GM13976 (cell line): ENCODE measurements at regions of chr11 and their contacts with region 1.

Region 1: DNA sequence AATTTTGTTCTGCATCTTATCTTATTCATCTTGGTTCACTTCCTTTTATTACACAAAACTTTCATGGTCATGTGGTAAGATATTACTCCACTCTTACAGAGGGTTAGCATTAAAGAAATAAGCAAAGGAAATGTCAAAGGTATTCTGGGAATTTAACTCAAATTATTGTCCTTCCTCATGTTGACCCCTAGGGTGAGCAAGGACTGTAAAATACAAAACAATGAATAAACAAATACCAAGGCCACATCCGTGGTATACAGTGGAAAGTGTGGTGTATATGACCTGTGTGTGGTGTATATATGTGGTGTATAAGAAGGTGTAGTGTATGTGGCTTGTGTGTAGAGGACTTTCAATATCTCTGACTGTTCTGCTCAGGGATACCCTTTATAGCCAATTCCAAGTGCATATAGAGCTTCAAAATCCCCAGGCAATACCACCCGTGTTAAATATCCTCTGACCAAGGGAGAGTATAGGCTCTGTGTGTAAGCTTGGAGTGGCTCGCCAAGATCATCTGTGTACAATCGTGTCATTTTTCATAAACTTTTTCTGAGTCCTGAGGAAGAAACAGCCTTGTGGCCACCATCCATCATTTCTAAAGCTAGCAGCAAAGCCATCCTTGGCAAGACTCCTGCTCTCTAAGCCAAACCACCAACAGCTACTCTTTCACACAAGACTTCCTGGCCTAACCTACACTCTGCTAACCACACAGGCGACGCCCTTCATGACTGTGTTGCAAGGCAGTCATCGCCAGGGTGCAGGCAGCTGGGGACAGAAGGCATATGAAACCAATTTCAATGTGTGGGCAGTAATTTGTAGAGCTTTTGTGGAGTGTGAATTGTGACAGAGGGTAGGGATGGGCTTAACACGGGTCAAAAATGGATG is 548.0 kb downstream of the ETS1 start:
- DNase-seq: no peak
- CTCF ChIP-seq: no peak

Region 2: GRCh38 chr11:128164080-128164741 is 124.8 kb after region 1 on chr11:
- in situ Hi-C with region 1: loop called (anchors 10 kb)
- DNase-seq: no peak
- CTCF ChIP-seq: no peak

Region 3: DNA sequence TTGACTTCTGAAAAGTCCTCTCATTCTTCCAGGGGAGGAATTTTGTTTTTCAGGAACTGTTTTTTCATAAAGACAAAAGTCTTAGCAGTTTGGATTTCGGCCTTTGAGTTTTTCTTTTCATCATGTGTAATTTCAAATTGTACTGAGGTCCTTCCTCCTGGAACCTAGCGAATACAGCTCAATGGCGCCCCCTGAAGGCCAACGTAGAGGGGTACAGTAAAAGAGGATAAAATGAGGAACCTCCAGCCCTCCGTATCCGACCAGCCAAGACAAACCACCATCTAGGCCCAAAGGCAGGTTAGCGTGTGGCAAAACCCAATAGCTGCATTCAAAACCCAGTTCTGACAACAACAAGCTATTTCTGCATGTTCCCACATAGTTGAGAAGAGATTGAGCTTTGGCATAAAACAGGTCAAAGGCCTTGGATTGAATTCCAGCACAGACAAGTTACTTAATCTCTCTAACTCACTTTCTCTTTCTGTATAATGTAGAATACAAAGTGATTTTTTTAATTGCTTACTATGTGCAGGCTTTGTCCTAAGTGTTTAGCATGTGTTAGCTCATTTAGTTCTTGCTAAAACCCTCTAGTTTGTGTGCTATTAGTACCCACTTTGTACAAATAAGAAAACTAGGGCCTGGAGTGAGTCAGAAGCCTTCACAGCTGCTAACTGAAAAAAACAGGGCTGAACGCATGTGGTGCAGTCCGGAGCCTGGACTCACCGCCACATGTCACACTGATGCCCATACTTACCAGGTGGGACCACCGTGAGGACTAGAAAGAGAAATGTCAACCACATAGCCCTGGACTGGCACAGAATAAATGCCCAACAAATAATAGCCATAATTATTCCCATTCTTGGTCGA is 591.2 kb after region 1 on chr11:
- in situ Hi-C with region 1: loop called (anchors 25 kb)
- DNase-seq: peak; percentile 77
- CTCF ChIP-seq: peak; percentile 88

Region 4: DNA sequence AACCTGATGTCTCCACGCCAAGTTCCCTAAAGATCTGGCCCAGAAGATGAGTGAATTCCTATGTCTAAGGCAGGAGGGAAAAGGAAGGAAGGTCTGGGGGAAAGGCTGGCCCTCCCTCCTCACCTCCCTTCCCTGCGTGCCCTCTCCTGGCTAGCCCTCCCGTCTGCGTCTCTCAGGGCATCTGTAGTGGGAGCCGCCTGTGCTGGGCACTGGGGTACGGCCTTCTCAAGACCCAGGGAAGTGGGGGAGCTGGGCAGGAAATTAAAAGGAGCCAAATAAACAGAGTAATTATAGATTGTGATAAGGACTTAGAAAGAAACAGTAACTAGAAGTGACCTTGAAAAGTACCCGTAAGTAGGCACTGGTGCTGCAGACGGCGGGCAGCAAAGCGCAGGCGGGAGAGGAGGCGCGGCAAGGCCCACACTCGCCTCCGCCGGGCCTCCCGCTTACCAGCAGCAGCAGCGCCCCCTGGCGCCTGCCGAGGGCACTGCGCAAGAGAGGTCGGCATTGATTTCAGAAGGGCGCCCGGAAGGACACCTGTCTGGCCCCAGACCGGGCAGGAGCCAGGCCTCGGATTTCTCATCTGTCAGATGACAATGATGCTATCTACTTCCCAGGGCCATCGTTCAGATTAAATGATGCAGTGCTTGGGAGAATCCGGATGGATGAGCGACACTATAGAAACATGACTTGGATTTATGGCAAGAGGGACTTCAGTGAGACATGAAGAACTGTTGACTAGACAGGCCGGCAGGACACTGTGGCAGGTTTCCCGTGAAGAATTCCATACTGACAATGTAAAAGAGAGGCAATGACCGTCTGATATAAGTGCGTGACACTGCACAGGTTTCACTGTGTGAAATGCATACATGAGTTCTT is 820.4 kb after region 1 on chr11:
- in situ Hi-C with region 1: loop called (anchors 10 kb)
- DNase-seq: peak; percentile 89
- CTCF ChIP-seq: peak; percentile 93